ENCODE measurements at regions of chr13 and their contacts with region 1.

Region 1: GRCh38 chr13:84896128-84896527 is 903.1 kb downstream of the SLITRK6 start:
- DNase-seq: peak in 5 of 7 donors; percentile 25 to 45 (median 27)
- H3K4me3 ChIP-seq: no peak overlapping the region
- H3K27ac ChIP-seq: no peak overlapping the region
- H3K4me1 ChIP-seq: no peaks in the 10 kb centered on the region
- H3K27me3 ChIP-seq: no peaks in the 10 kb centered on the region
- CTCF ChIP-seq: peak; percentile 43 to 70 (median 61)
- POLR2A ChIP-seq: no peak

Region 2: GRCh38 chr13:84670245-84670644 is 225.9 kb before region 1 on chr13:
- intact Hi-C with region 1: no loop called
- DNase-seq: no peak
- H3K4me3 ChIP-seq: no peak overlapping the region
- H3K27ac ChIP-seq: no peak overlapping the region
- H3K4me1 ChIP-seq: no peaks in the 10 kb centered on the region
- H3K27me3 ChIP-seq: no peaks in the 10 kb centered on the region
- CTCF ChIP-seq: no peak
- POLR2A ChIP-seq: no peak

Region 3: DNA sequence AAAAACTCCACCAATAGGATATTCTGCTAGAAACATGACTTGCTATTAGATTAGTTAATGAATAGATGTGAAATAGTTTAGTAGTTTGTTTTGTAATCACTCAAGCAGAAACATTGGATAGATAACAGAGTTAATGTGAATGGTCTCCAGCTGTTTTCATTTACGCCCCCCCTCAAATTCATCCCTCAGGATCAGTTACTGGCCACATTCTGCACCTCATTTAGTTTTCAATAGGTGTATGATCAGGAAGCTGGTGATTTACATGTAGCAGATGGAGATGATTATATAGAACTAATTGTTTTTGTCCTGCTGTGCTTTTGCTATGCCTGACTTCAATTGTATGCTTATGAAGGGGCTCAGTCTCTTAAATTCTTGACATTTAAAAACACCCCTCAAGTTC is 144.1 kb after region 1 on chr13:
- intact Hi-C with region 1: no loop called
- DNase-seq: no peak
- H3K4me3 ChIP-seq: no peak overlapping the region
- H3K27ac ChIP-seq: no peak overlapping the region
- H3K4me1 ChIP-seq: no peaks in the 10 kb centered on the region
- H3K27me3 ChIP-seq: no peaks in the 10 kb centered on the region
- CTCF ChIP-seq: no peak
- POLR2A ChIP-seq: no peak

Region 4: DNA sequence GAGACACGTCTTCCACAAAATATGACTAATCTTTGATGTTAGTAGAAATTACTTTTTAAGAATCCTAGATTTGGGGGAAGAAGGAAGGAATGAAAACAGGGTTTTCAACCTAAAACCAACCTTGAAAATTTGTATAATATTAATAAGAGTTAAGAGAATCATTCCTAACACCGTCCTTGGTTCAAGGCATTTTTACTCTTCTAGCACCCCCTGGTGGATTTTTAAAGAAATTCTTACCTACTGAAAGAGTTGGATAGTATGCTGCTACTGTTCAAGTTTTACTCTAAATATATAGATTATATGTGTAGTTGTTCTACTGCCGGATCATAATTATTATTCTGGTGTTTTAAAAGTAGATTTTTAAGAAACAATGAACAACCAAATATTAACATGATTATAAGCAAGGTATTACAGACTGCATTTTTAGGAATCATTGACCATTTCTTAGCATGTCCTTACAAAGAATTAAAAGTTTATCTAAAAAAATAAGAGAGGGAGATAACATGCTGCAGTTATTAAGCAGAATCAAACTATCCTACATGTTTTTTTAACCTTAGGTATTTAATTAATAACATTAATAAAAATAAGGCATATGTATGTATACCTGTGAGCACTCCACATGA is 910.5 kb after region 1 on chr13:
- intact Hi-C with region 1: loop called (anchors 5 kb)
- DNase-seq: no peak
- H3K4me3 ChIP-seq: no peak overlapping the region
- H3K27ac ChIP-seq: no peak overlapping the region
- H3K4me1 ChIP-seq: no peaks in the 10 kb centered on the region
- H3K27me3 ChIP-seq: no peaks in the 10 kb centered on the region
- CTCF ChIP-seq: peak; percentile 41 to 70 (median 53)
- POLR2A ChIP-seq: no peak

Measured in adrenal gland (tissue), 19 donors.